ENCODE measurements at regions of chr2 and their contacts with region 1.

Region 1: DNA sequence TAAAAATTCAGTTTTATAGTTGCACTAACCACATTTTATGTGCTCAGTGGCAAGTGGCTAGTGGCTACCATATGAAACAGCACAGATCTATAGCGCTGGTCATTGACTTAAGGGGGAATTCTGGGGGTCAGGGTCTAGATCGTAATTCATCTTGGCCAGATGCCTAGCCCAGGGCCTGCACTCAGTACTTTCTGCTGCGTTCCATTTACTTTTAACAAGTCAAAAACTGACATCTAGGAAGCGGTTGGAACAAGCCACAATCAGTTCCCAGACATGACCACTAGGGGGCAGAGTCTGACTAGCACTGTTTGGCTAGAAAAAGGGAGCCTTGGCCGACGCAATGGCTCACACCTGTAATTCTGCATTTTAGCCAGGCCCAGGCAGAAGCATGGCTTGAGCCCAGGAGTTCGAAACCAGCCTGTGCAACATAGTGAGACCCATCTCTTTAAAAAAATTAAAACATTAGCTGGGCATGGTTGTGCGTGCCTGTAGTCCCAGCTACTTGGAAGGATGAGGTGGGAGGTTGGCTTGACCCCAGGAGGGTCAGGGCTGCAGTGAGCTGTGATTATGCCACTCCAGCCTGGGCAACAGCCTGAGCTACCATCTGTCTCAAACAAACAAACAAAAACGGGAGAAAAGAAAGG is 9.0 kb upstream of the TMBIM1 start:
- DNase-seq: peak; percentile 56 to 69
- ATAC-seq: peak; percentile 87
- H3K4me3 ChIP-seq: no peak overlapping the region
- H3K27ac ChIP-seq: no peak overlapping the region
- H3K4me1 ChIP-seq: no peaks in the 10 kb centered on the region
- H3K27me3 ChIP-seq: no peaks in the 10 kb centered on the region
- CTCF ChIP-seq: peak; percentile 93 to 98 (median 95)
- POLR2A ChIP-seq: no peak

Region 2: GRCh38 chr2:217798743-217799562 is 502.3 kb before region 1 on chr2:
- in situ Hi-C with region 1: no loop called
- intact Hi-C with region 1: no loop called
- DNase-seq: peak in 1 of 2 donors; percentile 42
- ATAC-seq: no peak
- H3K4me3 ChIP-seq: no peak overlapping the region
- H3K27ac ChIP-seq: peak overlapping the region; percentile 73 to 83 (median 81)
- H3K4me1 ChIP-seq: peaks cover 9 to 43% of the 10 kb centered on the region in 2 donors
- H3K27me3 ChIP-seq: no peaks in the 10 kb centered on the region
- CTCF ChIP-seq: no peak
- POLR2A ChIP-seq: no peak

Region 3: GRCh38 chr2:218360447-218360846 is 59.1 kb after region 1 on chr2:
- in situ Hi-C with region 1: loop called in 1 of 4 experiments (anchors 5 kb)
- intact Hi-C with region 1: loop called (anchors 10 kb)
- DNase-seq: peak in 1 of 2 donors; percentile 19
- ATAC-seq: no peak
- H3K4me3 ChIP-seq: no peak overlapping the region
- H3K27ac ChIP-seq: no peak overlapping the region
- H3K4me1 ChIP-seq: no peaks in the 10 kb centered on the region
- H3K27me3 ChIP-seq: no peaks in the 10 kb centered on the region
- CTCF ChIP-seq: no peak
- POLR2A ChIP-seq: no peak

Region 4: DNA sequence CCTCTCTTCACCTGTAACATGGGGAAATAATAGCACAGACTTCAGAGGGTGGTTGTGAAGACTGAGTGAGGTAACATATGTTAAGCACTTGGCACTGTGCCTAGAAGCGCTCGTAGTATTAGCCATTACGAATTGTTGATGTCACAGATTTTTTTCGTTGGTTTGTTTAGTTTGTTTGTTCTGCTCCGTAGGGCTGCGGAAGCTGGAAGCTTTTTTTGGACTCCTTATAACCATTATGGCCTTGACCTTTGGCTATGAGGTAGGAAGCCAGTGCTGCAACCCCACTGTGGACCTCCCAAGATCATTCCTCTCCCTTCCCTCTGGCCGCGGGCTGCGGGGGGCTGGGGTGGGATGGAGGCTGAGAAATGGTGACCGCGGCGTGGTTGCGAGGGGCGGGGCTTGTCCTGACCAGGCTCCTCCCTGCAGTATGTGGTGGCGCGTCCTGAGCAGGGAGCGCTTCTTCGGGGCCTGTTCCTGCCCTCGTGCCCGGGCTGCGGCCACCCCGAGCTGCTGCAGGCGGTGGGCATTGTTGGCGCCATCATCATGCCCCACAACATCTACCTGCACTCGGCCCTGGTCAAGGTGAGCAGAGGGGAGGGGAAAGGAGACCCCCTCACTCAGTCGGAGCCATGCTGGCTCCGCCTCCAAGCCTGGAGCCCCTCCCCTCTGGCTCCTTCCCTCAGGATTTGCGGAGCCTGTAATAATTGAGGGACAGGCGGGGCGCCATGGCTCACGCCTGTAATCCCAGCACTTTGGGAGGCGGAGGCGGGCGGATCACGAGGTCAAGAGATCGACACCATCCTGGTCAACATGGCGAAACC is 86.3 kb after region 1 on chr2:
- in situ Hi-C with region 1: loop called in 3 of 4 experiments (anchors 5 to 10 kb)
- intact Hi-C with region 1: no loop called
- DNase-seq: no peak
- ATAC-seq: peak; percentile 73 to 80
- H3K4me3 ChIP-seq: peak overlapping the region; percentile 42 to 66 (median 52)
- H3K27ac ChIP-seq: peak overlapping the region; percentile 6 to 37 (median 29)
- H3K4me1 ChIP-seq: no peaks in the 10 kb centered on the region
- H3K27me3 ChIP-seq: no peaks in the 10 kb centered on the region
- CTCF ChIP-seq: no peak
- POLR2A ChIP-seq: no peak

Region 5: DNA sequence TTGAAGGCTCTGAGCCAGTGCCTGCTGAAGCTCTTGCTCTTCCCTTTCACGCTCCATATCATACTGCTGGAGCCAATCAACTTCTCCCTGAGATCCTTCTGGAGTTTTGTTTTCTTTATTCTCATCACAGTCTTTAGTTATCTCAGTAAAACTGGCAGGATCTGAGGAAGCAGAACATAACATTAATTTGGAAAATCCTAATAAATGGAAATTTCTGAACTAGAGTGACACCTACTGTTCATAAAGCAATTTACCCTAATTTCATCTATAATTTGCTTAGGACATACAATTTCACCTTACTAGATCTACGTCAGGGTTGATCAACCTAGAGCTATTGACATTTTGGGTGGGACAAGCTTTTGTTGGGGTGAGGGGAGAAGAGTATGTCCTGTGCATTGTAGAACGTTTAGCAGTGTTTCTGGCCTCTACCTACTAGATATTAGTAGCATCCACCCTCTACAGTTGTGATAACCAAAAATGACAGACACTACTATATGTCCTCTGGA is 164.8 kb after region 1 on chr2:
- in situ Hi-C with region 1: loop called in 3 of 4 experiments (anchors 5 to 25 kb)
- intact Hi-C with region 1: loop called (anchors 2 kb)
- DNase-seq: no peak
- ATAC-seq: no peak
- H3K4me3 ChIP-seq: no peak overlapping the region
- H3K27ac ChIP-seq: no peak overlapping the region
- H3K4me1 ChIP-seq: no peaks in the 10 kb centered on the region
- H3K27me3 ChIP-seq: no peaks in the 10 kb centered on the region
- CTCF ChIP-seq: peak in 4 of 5 experiments; percentile 27 to 47 (median 41)
- POLR2A ChIP-seq: no peak